Right cardiac atrium (tissue), 5 donors: ENCODE measurements at regions of chr4 and their contacts with region 1.

Region 1: GRCh38 chr4:77734928-77735327 is 84.2 kb downstream of the CNOT6L start:
- DNase-seq: no peak
- ATAC-seq: no peak
- H3K4me3 ChIP-seq: no peak overlapping the region
- H3K27ac ChIP-seq: no peak overlapping the region
- H3K4me1 ChIP-seq: no peaks in the 10 kb centered on the region
- H3K27me3 ChIP-seq: no peaks in the 10 kb centered on the region

Region 2: GRCh38 chr4:77800483-77801259 is 65.7 kb after region 1 on chr4:
- intact Hi-C with region 1: loop called in 1 of 4 experiments (anchors 10 kb)
- DNase-seq: no peak
- ATAC-seq: peak; percentile 80 to 95
- H3K4me3 ChIP-seq: no peak overlapping the region
- H3K27ac ChIP-seq: no peak overlapping the region
- H3K4me1 ChIP-seq: peaks cover 12% of the 10 kb centered on the region
- H3K27me3 ChIP-seq: no peaks in the 10 kb centered on the region